Activated naive CD4-positive, alpha-beta T cell treated with anti-CD3 and anti-CD28 coated beads for 36 hours (primary cell): ENCODE measurements at regions of chr16 and their contacts with region 1.

Region 1: DNA sequence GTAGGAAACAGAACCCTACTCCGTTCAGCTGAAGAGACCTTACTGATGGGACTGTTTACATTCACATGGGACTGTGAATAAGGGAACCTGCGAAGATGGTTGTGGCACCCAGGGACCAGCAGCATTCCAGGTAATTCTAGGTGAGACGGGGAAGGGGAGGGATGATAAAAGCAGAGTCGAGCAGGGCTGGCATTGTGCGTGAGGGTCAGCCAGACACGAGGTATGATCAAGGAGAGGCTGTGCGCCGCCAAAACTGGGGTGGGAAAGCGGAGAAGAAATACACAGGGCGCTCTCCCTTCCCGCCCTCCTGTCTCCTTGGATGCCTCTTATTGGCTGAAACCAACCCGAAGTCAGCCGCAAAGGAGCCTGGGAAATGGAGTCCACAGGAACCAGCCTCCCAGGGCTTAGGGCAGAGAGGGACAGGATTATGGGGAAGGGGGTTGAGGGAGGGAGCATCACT is 38.4 kb upstream of the CSNK2A2 start:
- DNase-seq: peak; percentile 84
- H3K4me3 Mint-ChIP-seq: peak overlapping the region; percentile 86
- H3K27ac Mint-ChIP-seq: no peak overlapping the region
- H3K4me1 Mint-ChIP-seq: peaks cover 5% of the 10 kb centered on the region
- H3K27me3 Mint-ChIP-seq: peaks cover 11% of the 10 kb centered on the region

Region 2: GRCh38 chr16:58392215-58393137 is 156.2 kb after region 1 on chr16 and contains the start of gene GINS3:
- CTCF ChIA-PET with region 1: no interaction called
- intact Hi-C with region 1: loop called (anchors 2 kb)
- DNase-seq: peak; percentile 94
- H3K4me3 Mint-ChIP-seq: peak within 1 kb of the TSS; percentile 98
- H3K27ac Mint-ChIP-seq: peak within 1 kb of the TSS; percentile 99
- H3K4me1 Mint-ChIP-seq: peaks cover 16% of the 10 kb centered on the region
- H3K27me3 Mint-ChIP-seq: no peaks in the 10 kb centered on the region
- total RNA-seq, gene GINS3: 19.2 to 20.3 TPM